ENCODE measurements at regions of chr1 and their contacts with region 1.

Region 1: GRCh38 chr1:171226747-171227370 is 21.4 kb upstream of the FMO1 start:
- DNase-seq: peak; percentile 53
- ATAC-seq: peak; percentile 87
- H3K4me3 Mint-ChIP-seq: no peak overlapping the region
- H3K27ac Mint-ChIP-seq: no peak overlapping the region
- H3K4me1 Mint-ChIP-seq: peaks cover 32% of the 10 kb centered on the region
- H3K27me3 Mint-ChIP-seq: no peaks in the 10 kb centered on the region
- CTCF ChIP-seq: peak; percentile 60

Region 2: GRCh38 chr1:171081314-171081753 is 145.5 kb before region 1 on chr1:
- CTCF ChIA-PET with region 1: interaction called, 43 read pairs
- POLR2A ChIA-PET with region 1: no interaction called
- DNase-seq: no peak
- ATAC-seq: no peak
- H3K4me3 Mint-ChIP-seq: no peak overlapping the region
- H3K27ac Mint-ChIP-seq: no peak overlapping the region; the same call in 1 of the 2 replicates
- H3K4me1 Mint-ChIP-seq: peaks cover 5% of the 10 kb centered on the region
- H3K27me3 Mint-ChIP-seq: no peaks in the 10 kb centered on the region
- CTCF ChIP-seq: no peak

Region 3: GRCh38 chr1:171141688-171142415 is 85.0 kb before region 1 on chr1:
- CTCF ChIA-PET with region 1: interaction called, 12 read pairs
- POLR2A ChIA-PET with region 1: no interaction called
- DNase-seq: no peak
- ATAC-seq: peak; percentile 87
- H3K4me3 Mint-ChIP-seq: no peak overlapping the region
- H3K27ac Mint-ChIP-seq: peak overlapping the region; percentile 50
- H3K4me1 Mint-ChIP-seq: peaks cover 34% of the 10 kb centered on the region
- H3K27me3 Mint-ChIP-seq: no peaks in the 10 kb centered on the region
- CTCF ChIP-seq: no peak

Region 4: GRCh38 chr1:171188388-171189266 is 38.2 kb before region 1 on chr1:
- CTCF ChIA-PET with region 1: interaction called, 11 read pairs
- POLR2A ChIA-PET with region 1: no interaction called
- DNase-seq: peak; percentile 57
- ATAC-seq: peak; percentile 95
- H3K4me3 Mint-ChIP-seq: no peak overlapping the region
- H3K27ac Mint-ChIP-seq: no peak overlapping the region
- H3K4me1 Mint-ChIP-seq: peaks cover 7% of the 10 kb centered on the region
- H3K27me3 Mint-ChIP-seq: no peaks in the 10 kb centered on the region
- CTCF ChIP-seq: peak; percentile 82

Region 5: GRCh38 chr1:171210355-171210754 is 16.5 kb before region 1 on chr1:
- CTCF ChIA-PET with region 1: interaction called, 14 read pairs
- POLR2A ChIA-PET with region 1: no interaction called
- DNase-seq: no peak
- ATAC-seq: peak; percentile 37
- H3K4me3 Mint-ChIP-seq: no peak overlapping the region
- H3K27ac Mint-ChIP-seq: no peak overlapping the region
- H3K4me1 Mint-ChIP-seq: peaks cover 46% of the 10 kb centered on the region
- H3K27me3 Mint-ChIP-seq: peaks cover 8% of the 10 kb centered on the region
- CTCF ChIP-seq: no peak

Measured in WTC11 (cell line).